Panc1 (cell line): ENCODE measurements at regions of chr20 and their contacts with region 1.

Region 1: GRCh38 chr20:38304845-38305447 is 990 bp downstream of the BPI start:
- DNase-seq: peak; percentile 7
- ATAC-seq: peak; percentile 83
- H3K4me3 ChIP-seq: no peak overlapping the region
- H3K27ac ChIP-seq: no peak overlapping the region
- H3K4me1 ChIP-seq: no peaks in the 10 kb centered on the region
- H3K27me3 ChIP-seq: no peaks in the 10 kb centered on the region
- CTCF ChIP-seq: peak; percentile 79

Region 2: DNA sequence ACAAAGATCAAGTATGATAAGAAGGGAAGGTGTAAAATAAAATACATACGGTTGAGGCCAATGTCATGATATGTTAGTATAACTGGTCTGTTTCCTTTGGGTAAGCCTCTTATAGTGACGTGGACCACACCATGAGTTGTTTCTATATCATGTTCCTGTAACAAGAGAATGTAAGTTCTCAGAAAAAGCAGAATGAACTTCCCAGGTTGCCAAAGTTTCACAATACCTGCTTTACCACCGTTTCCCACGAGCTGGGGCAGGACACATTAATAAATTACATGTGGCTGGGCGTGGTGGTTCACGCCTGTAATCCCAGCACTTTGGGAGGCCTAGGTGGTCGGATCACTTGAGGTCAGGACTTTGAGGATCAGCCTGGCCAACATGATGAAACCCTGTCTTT is 1616.3 kb before region 1 on chr20:
- CTCF ChIA-PET with region 1: interaction called, 10 read pairs
- POLR2A ChIA-PET with region 1: no interaction called
- in situ Hi-C with region 1: no loop called
- intact Hi-C with region 1: no loop called
- DNase-seq: no peak
- ATAC-seq: no peak
- H3K4me3 ChIP-seq: no peak overlapping the region
- H3K27ac ChIP-seq: no peak overlapping the region
- H3K4me1 ChIP-seq: no peaks in the 10 kb centered on the region
- H3K27me3 ChIP-seq: no peaks in the 10 kb centered on the region
- CTCF ChIP-seq: no peak

Region 3: DNA sequence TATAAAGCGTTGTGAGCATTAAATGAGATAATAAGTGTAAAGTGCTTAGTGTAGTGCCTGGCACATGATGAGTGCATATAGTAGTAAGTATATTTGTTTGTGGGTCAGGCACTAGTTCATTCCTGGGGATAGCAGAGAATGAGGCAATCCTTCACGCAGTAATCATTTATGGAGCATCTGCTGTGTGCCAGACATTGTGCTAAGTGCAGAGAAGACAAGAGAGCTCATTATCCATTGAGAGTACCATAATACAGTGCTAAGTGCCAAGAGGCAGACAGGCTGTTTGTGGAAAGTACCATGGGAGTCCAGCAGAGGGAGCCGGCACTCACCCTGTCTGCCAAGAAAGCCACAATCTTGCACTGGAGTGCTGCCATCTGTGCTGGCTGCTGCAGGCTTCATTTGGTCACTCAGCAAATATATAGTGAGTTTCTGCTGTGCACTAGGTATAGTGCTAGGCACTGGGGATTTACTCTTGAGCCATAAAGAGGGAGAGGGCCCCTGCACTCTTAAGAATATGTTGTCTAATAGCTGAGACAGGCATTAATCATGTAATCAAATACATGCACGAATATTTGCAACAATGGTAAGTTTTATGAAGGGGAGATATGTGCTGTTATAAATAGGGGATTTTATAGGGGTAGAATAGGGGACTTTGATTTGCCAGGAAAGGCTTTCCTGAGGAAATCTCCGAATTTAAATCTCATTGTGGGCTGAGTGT is 1112.7 kb before region 1 on chr20:
- CTCF ChIA-PET with region 1: interaction called, 10 read pairs
- POLR2A ChIA-PET with region 1: no interaction called
- in situ Hi-C with region 1: no loop called
- intact Hi-C with region 1: no loop called
- DNase-seq: peak; percentile 61
- ATAC-seq: peak; percentile 91
- H3K4me3 ChIP-seq: no peak overlapping the region
- H3K27ac ChIP-seq: no peak overlapping the region
- H3K4me1 ChIP-seq: no peaks in the 10 kb centered on the region; the same call in 1 of the 2 replicates
- H3K27me3 ChIP-seq: no peaks in the 10 kb centered on the region
- CTCF ChIP-seq: peak; percentile 95

Region 4: GRCh38 chr20:38260378-38261053 is 44.4 kb before region 1 on chr20 and contains the start of gene KIAA1755:
- CTCF ChIA-PET with region 1: no interaction called
- POLR2A ChIA-PET with region 1: no interaction called
- in situ Hi-C with region 1: no loop called
- intact Hi-C with region 1: no loop called
- DNase-seq: no peak
- ATAC-seq: peak; percentile 59; the same call in 1 of the 2 replicates
- H3K4me3 ChIP-seq: no peak within 1 kb of the TSS
- H3K27ac ChIP-seq: no peak within 1 kb of the TSS
- H3K4me1 ChIP-seq: no peaks in the 10 kb centered on the region
- H3K27me3 ChIP-seq: peaks cover 2% of the 10 kb centered on the region; the same call in 1 of the 2 replicates
- CTCF ChIP-seq: no peak
- total RNA-seq, gene KIAA1755: 0.08 TPM

Region 5: GRCh38 chr20:38270869-38271605 is 33.9 kb before region 1 on chr20:
- CTCF ChIA-PET with region 1: no interaction called
- POLR2A ChIA-PET with region 1: no interaction called
- in situ Hi-C with region 1: no loop called
- intact Hi-C with region 1: no loop called
- DNase-seq: no peak
- ATAC-seq: peak; percentile 90
- H3K4me3 ChIP-seq: no peak overlapping the region
- H3K27ac ChIP-seq: no peak overlapping the region
- H3K4me1 ChIP-seq: peaks cover 8% of the 10 kb centered on the region
- H3K27me3 ChIP-seq: no peaks in the 10 kb centered on the region
- CTCF ChIP-seq: no peak

Region 6: DNA sequence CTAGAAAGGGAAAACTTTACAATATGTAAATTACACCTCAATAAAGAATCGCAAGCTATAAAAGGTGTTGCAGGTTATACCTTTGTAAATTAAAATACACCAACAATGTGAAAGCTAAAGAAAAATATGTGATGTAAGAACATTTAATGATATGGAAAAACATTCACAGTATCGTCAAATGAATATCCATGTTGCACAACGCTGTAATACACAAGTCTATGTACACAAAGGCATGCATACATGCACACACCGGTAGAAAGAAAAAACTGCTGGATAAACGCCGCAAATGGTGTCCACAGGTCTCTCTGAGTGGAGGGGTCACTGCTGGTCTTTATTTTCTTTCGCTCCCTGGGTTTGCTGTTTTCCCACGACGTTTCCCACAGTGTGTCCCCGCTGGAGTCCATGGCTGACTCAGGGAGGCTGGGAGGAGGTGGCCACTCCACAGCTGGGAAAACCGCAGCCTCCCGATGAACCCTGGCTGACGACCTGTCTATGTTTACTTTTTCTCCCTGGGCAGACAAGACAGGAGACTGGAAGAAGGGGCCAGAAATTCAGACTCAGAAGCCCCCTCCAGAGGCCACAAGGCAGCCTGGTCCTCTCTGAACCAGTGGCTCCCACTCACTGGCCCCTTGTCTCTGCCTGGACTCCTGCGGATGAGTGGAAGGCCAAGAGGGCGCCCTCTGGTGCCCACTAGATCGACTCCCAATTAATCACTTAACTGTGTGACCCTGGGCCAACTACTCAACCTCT is 13.9 kb before region 1 on chr20:
- CTCF ChIA-PET with region 1: no interaction called
- POLR2A ChIA-PET with region 1: no interaction called
- in situ Hi-C with region 1: no loop called
- intact Hi-C with region 1: no loop called
- DNase-seq: no peak
- ATAC-seq: peak; percentile 80
- H3K4me3 ChIP-seq: no peak overlapping the region
- H3K27ac ChIP-seq: no peak overlapping the region; the same call in 1 of the 2 replicates
- H3K4me1 ChIP-seq: no peaks in the 10 kb centered on the region; the same call in 1 of the 2 replicates
- H3K27me3 ChIP-seq: no peaks in the 10 kb centered on the region
- CTCF ChIP-seq: peak; percentile 80; the same call in 1 of the 2 replicates

Region 7: DNA sequence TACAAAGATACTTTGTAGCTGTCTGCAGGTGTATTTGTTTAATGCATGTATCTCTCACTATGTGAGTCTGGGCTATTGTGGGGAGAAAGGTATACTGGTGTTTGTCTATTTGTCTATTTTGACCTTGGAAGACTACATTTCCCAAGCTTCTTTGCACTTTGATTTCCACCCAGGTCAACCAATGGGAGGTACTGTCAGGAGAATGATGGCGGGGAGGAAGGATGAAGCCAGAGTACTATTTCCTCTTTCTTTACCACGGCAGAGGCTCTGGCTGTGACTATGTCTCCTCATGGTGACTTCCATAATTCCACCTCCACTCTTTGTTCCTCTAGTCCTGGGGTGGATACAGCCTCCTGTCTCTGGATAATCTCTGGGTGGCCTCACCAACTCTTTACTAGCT is 64.4 kb after region 1 on chr20:
- CTCF ChIA-PET with region 1: no interaction called
- POLR2A ChIA-PET with region 1: interaction called, 10 read pairs
- in situ Hi-C with region 1: no loop called
- intact Hi-C with region 1: no loop called
- DNase-seq: no peak
- ATAC-seq: peak; percentile 76; the same call in 1 of the 2 replicates
- H3K4me3 ChIP-seq: no peak overlapping the region
- H3K27ac ChIP-seq: no peak overlapping the region
- H3K4me1 ChIP-seq: no peaks in the 10 kb centered on the region
- H3K27me3 ChIP-seq: peaks cover 6% of the 10 kb centered on the region; the same call in 1 of the 2 replicates
- CTCF ChIP-seq: no peak